Right cardiac atrium (tissue), 5 donors: ENCODE measurements at regions of chr11 and their contacts with region 1.

Region 1: GRCh38 chr11:110948112-110948511 is 235.9 kb upstream of the ARHGAP20 start:
- DNase-seq: no peak
- ATAC-seq: peak; percentile 65 to 85
- H3K4me3 ChIP-seq: no peak overlapping the region
- H3K27ac ChIP-seq: no peak overlapping the region
- H3K4me1 ChIP-seq: peaks cover 2% of the 10 kb centered on the region
- H3K27me3 ChIP-seq: no peaks in the 10 kb centered on the region

Region 2: DNA sequence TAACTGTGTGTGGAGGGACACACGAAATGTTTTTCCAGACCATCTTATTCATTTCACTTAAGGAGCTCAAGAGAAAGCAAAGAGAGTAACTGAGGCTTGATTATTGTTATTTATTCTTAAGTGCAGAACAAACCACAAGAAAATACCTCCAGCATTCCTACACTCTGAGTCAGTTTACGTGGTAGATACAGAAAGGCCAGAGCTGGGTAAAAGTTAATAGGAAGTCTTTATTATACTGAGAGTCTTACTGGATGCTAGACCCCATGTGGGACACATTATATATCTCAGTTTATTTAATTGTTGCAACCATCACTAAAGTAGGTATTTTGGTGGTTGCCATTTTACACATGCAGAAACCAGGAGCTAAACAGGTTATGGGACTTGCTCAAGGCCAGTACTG is 36.0 kb after region 1 on chr11:
- intact Hi-C with region 1: no loop called
- DNase-seq: no peak
- ATAC-seq: no peak
- H3K4me3 ChIP-seq: no peak overlapping the region
- H3K27ac ChIP-seq: no peak overlapping the region
- H3K4me1 ChIP-seq: no peaks in the 10 kb centered on the region
- H3K27me3 ChIP-seq: no peaks in the 10 kb centered on the region

Region 3: DNA sequence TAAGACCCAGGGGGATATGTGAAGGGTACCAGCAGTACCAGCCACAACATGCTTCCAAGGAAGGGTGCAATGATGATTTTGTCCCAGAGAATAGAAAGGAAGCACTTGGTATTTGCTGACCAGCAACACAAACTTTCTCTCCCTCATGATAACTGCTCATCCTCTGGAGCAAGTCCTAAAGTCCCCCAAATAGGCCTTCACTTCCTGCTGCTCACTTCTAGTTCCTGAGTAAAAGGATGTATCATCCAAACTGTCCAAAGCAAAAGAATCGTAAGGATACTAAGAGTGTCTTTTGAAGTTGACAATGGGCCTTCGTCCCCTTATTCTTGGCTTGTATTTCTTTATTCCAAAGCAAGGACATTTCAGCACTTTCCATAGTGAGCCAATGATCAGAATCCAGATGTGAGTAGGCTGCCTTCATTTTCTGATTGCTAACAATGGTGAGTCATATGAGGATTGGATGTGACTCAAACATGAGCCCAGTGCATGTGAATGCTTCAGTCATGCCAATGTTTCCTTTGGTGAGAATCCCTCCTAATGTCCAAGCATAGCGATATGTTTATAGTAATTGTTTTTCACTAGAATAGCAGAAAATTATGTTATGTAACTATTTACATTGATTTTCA is 54.0 kb after region 1 on chr11:
- intact Hi-C with region 1: loop called in 1 of 4 experiments (anchors 10 kb)
- DNase-seq: no peak
- ATAC-seq: peak; percentile 78 to 84
- H3K4me3 ChIP-seq: no peak overlapping the region
- H3K27ac ChIP-seq: no peak overlapping the region
- H3K4me1 ChIP-seq: no peaks in the 10 kb centered on the region
- H3K27me3 ChIP-seq: no peaks in the 10 kb centered on the region

Region 4: GRCh38 chr11:111177037-111177871 is 229.1 kb after region 1 on chr11:
- intact Hi-C with region 1: no loop called
- DNase-seq: no peak
- ATAC-seq: no peak
- H3K4me3 ChIP-seq: no peak overlapping the region
- H3K27ac ChIP-seq: no peak overlapping the region
- H3K4me1 ChIP-seq: no peaks in the 10 kb centered on the region
- H3K27me3 ChIP-seq: no peaks in the 10 kb centered on the region